H1 (cell line): ENCODE measurements at regions of chr9 and their contacts with region 1.

Region 1: DNA sequence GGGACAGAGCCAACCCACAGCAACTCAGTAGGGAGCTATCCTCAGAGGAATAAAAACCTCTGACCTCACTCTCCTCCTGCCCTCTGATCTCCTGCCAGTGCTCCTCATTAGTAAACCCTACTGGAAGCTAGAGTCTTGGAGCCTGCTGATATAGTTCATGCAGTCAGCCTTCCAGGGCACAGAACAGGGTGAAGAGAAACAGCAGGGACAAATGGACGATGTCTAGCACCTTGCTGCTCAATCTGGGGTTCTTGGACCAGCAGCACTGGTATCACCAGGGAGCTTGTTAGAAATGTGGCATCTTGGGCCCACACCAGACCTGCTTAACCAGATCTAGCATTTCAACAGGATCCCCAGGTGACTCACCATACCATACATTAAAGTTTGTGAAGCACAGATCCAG is 5.5 kb upstream of the GALNT12 start:
- DNase-seq: peak in 1 of 2 experiments; percentile 39
- H3K4me3 ChIP-seq: no peak overlapping the region
- H3K27ac ChIP-seq: no peak overlapping the region
- H3K4me1 ChIP-seq: peaks cover 0 to 11% (median 2%) of the 10 kb centered on the region in 4 experiments; a peak in 5 of 7 replicates
- H3K27me3 ChIP-seq: no peaks in the 10 kb centered on the region; a peak in 1 of 7 replicates
- CTCF ChIP-seq: no peak
- EP300 ChIP-seq: no peak
- POLR2A ChIP-seq: no peak
- RAD21 ChIP-seq: no peak

Region 2: DNA sequence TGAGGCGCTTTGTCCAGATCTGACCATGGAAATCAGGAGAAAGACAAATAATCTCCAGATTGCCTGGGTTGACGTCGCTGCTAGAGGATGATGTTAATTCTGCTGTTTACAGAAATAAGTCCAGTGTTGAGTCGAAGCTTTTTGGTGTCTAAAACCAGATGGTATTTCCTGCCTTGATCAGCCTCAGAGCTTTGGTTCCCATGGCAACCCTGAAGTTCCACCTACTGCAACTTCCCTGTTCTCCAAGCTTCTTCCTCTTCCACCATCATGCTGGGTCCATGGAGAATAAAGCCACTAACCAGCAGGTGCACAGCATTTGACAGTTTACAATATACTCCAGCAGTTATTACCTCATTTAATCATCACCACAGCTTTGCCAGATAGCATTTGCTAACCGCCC is 75.2 kb before region 1 on chr9:
- CTCF ChIA-PET with region 1: no interaction called
- POLR2A ChIA-PET with region 1: no interaction called
- DNase-seq: no peak
- H3K4me3 ChIP-seq: no peak overlapping the region
- H3K27ac ChIP-seq: no peak overlapping the region
- H3K4me1 ChIP-seq: peaks cover 0 to 3% (median 0%) of the 10 kb centered on the region in 4 experiments; a peak in 2 of 7 replicates
- H3K27me3 ChIP-seq: peaks cover 0 to 7% (median 0%) of the 10 kb centered on the region in 4 experiments; a peak in 4 of 7 replicates
- CTCF ChIP-seq: no peak
- EP300 ChIP-seq: no peak
- POLR2A ChIP-seq: no peak
- RAD21 ChIP-seq: no peak

Region 3: GRCh38 chr9:98791147-98792095 is 10.5 kb before region 1 on chr9:
- CTCF ChIA-PET with region 1: interaction called, 28 read pairs
- POLR2A ChIA-PET with region 1: interaction called, 16 read pairs
- DNase-seq: peak; percentile 80 to 93
- H3K4me3 ChIP-seq: no peak overlapping the region
- H3K27ac ChIP-seq: peak overlapping the region; percentile 14; the same call in 1 of the 2 replicates
- H3K4me1 ChIP-seq: peaks cover 5 to 18% (median 8%) of the 10 kb centered on the region in 4 experiments
- H3K27me3 ChIP-seq: no peaks in the 10 kb centered on the region
- CTCF ChIP-seq: peak; percentile 80 to 98 (median 96)
- EP300 ChIP-seq: no peak; a peak in 1 of 3 replicates
- POLR2A ChIP-seq: no peak
- RAD21 ChIP-seq: peak; percentile 34 to 53

Region 4: GRCh38 chr9:98834386-98834785 is 32.4 kb after region 1 on chr9:
- CTCF ChIA-PET with region 1: no interaction called
- POLR2A ChIA-PET with region 1: no interaction called
- DNase-seq: no peak
- H3K4me3 ChIP-seq: no peak overlapping the region
- H3K27ac ChIP-seq: no peak overlapping the region
- H3K4me1 ChIP-seq: peaks cover 0 to 4% (median under 1%) of the 10 kb centered on the region in 4 experiments; a peak in 2 of 7 replicates
- H3K27me3 ChIP-seq: no peaks in the 10 kb centered on the region
- CTCF ChIP-seq: no peak
- EP300 ChIP-seq: no peak
- POLR2A ChIP-seq: no peak
- RAD21 ChIP-seq: no peak